Left colon (tissue), 2 donors: ENCODE measurements at regions of chr15 and their contacts with region 1.

Region 1: DNA sequence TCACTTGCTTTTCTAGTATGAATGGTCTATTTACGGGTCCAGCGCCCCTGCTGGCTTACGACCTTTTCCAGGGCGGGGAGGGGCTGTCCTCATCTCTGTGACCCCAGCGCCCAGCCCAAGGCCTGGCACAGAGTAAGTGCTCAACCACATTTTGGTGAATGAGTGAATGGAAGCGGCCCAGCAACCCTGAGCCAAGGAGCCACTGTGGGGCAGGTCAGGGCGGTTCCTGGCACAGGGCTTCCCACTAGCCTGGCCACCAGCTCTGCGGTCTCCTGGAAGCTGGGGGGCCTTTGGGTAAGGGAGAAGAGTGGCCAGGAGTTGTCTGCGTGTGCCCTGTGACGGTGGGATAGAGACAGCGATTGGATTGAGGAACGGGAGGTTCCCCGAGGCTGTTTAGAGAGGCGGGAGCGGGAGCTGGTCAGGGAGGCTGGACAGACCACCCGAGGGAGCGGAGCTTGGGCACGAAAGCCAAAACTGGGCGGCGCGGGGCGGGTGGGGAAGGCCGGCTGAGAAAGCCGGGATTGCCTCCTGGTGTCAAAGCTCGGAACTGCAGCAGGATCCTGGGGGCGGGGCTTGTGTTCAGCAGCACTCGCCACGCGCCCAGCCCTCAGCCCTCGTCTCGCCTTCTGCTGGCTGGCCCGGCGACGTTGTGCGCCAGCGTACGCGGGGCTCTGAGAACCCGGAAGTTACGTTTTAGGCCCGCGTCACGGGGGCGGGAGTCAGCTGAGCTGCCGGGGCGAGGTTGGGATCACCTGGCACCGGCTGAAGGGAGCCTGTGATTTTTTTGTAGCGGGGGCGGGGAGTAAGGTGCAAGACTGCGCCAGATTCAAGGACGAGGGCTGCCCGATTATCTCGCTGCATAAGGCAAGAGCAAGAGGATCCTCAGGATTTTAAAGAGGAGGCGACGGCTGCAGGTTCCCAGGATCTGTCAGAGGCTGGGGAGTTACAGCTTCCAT is at the start of gene VPS18:
- DNase-seq: peak; percentile 98 to 99
- ATAC-seq: peak; percentile 85
- total RNA-seq, gene VPS18: 20.8 to 20.9 TPM

Region 2: GRCh38 chr15:40857601-40858341 is 36.2 kb before region 1 on chr15:
- intact Hi-C with region 1: loop called in 1 of 2 experiments (anchors 5 kb)
- DNase-seq: peak; percentile 78 to 86
- ATAC-seq: peak; percentile 63

Region 3: GRCh38 chr15:40974879-40975278 is 80.9 kb after region 1 on chr15:
- intact Hi-C with region 1: no loop called
- DNase-seq: no peak
- ATAC-seq: no peak